HCT116 (cell line): ENCODE measurements at regions of chr1 and their contacts with region 1.

Region 1: DNA sequence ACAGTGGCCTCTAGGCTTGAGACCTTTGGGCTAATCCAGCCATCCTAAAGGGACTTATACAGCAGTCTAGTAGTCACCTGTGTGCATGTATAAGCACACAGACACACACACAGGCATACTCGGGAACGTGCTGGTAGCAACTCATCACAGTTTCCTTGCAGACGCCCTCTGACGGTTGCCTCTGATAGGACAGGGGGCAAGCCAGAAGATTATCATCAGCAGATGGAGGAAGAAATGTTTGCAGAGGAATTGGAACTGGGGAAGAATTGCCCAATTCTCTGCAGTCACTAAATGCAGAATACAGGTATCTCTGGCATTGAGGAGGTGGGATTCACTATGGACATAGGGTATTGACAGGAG is 222.2 kb downstream of the C1orf94 start:
- DNase-seq: no peak
- ATAC-seq: peak; percentile 68
- H3K4me3 ChIP-seq: no peak overlapping the region
- H3K27ac ChIP-seq: no peak overlapping the region
- H3K4me1 ChIP-seq: no peaks in the 10 kb centered on the region
- H3K27me3 ChIP-seq: no peaks in the 10 kb centered on the region
- CTCF ChIP-seq: peak in 2 of 3 experiments; percentile 42 to 50; a peak in 4 of 6 replicates
- POLR2A ChIP-seq: no peak
- RAD21 ChIP-seq: peak; percentile 16; the same call in 1 of the 2 replicates

Region 2: GRCh38 chr1:34302798-34303197 is 96.1 kb before region 1 on chr1:
- CTCF ChIA-PET with region 1: no interaction called
- POLR2A ChIA-PET with region 1: no interaction called
- RAD21 ChIA-PET with region 1: no interaction called
- intact Hi-C with region 1: loop called (anchors 5 kb)
- DNase-seq: no peak
- ATAC-seq: no peak
- H3K4me3 ChIP-seq: no peak overlapping the region
- H3K27ac ChIP-seq: no peak overlapping the region
- H3K4me1 ChIP-seq: no peaks in the 10 kb centered on the region
- H3K27me3 ChIP-seq: no peaks in the 10 kb centered on the region
- CTCF ChIP-seq: no peak
- POLR2A ChIP-seq: no peak
- RAD21 ChIP-seq: no peak

Region 3: DNA sequence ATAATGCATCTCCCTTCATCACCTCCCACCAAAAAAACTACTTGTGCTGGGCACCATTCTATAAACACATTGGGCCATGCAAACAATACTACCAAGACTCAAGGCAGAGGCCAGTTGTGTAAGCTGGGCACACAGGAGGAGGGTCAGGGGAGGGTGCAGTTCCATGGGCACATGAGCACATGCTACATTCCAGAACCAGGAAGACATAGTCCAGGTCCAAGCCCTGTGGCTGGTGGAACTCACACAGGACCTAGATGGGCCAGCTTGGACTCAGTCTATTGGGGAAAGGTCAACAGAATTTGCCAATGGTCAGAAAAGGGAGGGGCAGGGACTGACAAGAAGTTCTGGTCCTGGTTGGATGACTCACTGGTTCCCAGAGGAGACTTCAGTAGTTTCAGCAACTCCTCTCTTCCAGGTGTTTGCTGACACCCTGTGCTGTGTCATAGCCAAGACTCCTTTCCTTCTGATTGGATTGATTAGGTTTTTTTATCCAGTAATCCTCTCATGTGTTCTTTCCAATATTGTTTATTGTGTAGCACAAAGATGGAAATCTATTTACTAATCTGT is 27.5 kb after region 1 on chr1:
- CTCF ChIA-PET with region 1: no interaction called
- POLR2A ChIA-PET with region 1: no interaction called
- RAD21 ChIA-PET with region 1: no interaction called
- intact Hi-C with region 1: no loop called
- DNase-seq: no peak
- ATAC-seq: no peak
- H3K4me3 ChIP-seq: no peak overlapping the region
- H3K27ac ChIP-seq: no peak overlapping the region
- H3K4me1 ChIP-seq: no peaks in the 10 kb centered on the region
- H3K27me3 ChIP-seq: peaks cover 24% of the 10 kb centered on the region
- CTCF ChIP-seq: no peak
- POLR2A ChIP-seq: no peak
- RAD21 ChIP-seq: no peak